Activated CD4-positive, alpha-beta memory T cell treated with anti-CD3 and anti-CD28 coated beads for 36 hours (primary cell): ENCODE measurements at regions of chr2 and their contacts with region 1.

Region 1: GRCh38 chr2:99141110-99142108 is at the start of gene C2orf15:
- DNase-seq: peak; percentile 98
- H3K4me3 Mint-ChIP-seq: peak within 1 kb of the TSS; percentile 93
- H3K27ac Mint-ChIP-seq: peak within 1 kb of the TSS; percentile 88
- H3K4me1 Mint-ChIP-seq: peaks cover 19% of the 10 kb centered on the region
- H3K27me3 Mint-ChIP-seq: no peaks in the 10 kb centered on the region
- total RNA-seq, gene C2orf15: 0.48 to 0.50 TPM

Region 2: GRCh38 chr2:98654699-98655495 is 486.5 kb before region 1 on chr2:
- CTCF ChIA-PET with region 1: interaction called, 7 read pairs
- POLR2A ChIA-PET with region 1: no interaction called
- intact Hi-C with region 1: loop called (anchors 10 kb)
- DNase-seq: no peak
- H3K4me3 Mint-ChIP-seq: no peak overlapping the region
- H3K27ac Mint-ChIP-seq: peak overlapping the region; percentile 67
- H3K4me1 Mint-ChIP-seq: peaks cover 76% of the 10 kb centered on the region
- H3K27me3 Mint-ChIP-seq: no peaks in the 10 kb centered on the region

Region 3: DNA sequence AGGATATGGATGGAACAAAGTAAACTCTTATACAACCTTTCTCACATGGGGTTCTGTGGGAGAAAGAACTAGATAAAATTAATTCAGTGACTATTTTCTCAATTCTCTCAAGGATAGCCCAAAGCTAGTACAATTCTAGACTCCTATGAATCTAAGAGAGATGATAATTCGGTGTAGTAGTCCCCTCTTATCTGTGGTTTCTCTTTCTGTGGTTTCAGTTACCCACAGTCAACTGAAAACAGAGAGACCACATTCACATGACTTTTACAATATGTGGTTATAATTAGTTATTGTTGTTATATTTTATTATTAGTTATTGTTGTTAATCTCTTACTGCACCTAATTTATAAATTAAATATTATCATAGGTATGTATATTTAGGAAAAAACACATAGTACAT is 53.4 kb before region 1 on chr2:
- CTCF ChIA-PET with region 1: no interaction called
- POLR2A ChIA-PET with region 1: no interaction called
- intact Hi-C with region 1: no loop called
- DNase-seq: no peak
- H3K4me3 Mint-ChIP-seq: no peak overlapping the region
- H3K27ac Mint-ChIP-seq: no peak overlapping the region
- H3K4me1 Mint-ChIP-seq: peaks cover 3% of the 10 kb centered on the region
- H3K27me3 Mint-ChIP-seq: peaks cover 8% of the 10 kb centered on the region

Region 4: GRCh38 chr2:99154643-99155536 is 13.5 kb after region 1 on chr2 and contains the starts of genes LIPT1 and TSGA10:
- CTCF ChIA-PET with region 1: interaction called, 5 read pairs
- POLR2A ChIA-PET with region 1: interaction called, 13 read pairs
- intact Hi-C with region 1: loop called (anchors 1 kb)
- DNase-seq: peak; percentile 96
- H3K4me3 Mint-ChIP-seq: no peak within 1 kb of the TSS
- H3K27ac Mint-ChIP-seq: peak within 1 kb of the TSS; percentile 91
- H3K4me1 Mint-ChIP-seq: peaks cover 24% of the 10 kb centered on the region
- H3K27me3 Mint-ChIP-seq: no peaks in the 10 kb centered on the region
- total RNA-seq, gene LIPT1: 3.3 to 4.6 TPM
- total RNA-seq, gene TSGA10: 6.3 to 7.0 TPM

Region 5: DNA sequence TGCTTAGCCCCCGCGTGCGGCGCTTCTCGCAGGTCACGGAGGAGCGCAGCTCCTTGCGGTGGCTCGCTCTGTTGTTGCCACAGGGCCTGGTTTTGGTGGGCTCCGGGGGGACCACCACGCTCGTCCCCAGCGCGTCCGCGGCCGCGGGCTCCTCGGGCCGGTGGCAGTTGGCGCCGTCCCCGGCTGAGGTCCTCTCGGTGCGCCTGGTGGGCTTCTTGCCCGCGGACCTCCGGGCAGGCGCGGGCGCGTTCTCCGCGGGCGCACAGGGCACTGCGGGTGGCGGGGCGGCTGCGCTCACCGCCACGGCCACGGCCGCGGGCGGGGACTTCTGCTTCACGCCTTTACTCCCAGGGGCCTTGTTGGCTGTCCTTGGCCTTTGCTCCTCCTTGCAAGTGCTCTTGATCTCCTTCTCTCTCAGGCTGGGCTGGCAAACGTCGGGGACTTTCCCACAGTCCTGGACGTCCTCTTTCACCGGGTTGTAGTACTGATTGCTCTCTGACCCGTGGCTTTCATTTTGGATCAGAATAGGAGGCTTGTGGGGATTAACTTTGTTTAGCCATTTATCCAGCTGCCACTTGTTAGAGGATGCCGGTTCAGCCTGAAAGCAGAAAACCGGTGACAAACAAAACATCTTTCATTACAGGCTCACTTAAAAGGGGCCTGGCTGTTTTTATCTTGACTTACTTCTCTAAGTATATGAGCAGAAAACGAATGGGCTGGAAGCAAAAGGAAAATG is 452.5 kb after region 1 on chr2:
- CTCF ChIA-PET with region 1: no interaction called
- POLR2A ChIA-PET with region 1: no interaction called
- intact Hi-C with region 1: no loop called
- DNase-seq: no peak
- H3K4me3 Mint-ChIP-seq: no peak overlapping the region
- H3K27ac Mint-ChIP-seq: no peak overlapping the region
- H3K4me1 Mint-ChIP-seq: no peaks in the 10 kb centered on the region
- H3K27me3 Mint-ChIP-seq: no peaks in the 10 kb centered on the region